ENCODE measurements at regions of chr2 and their contacts with region 1.

Region 1: DNA sequence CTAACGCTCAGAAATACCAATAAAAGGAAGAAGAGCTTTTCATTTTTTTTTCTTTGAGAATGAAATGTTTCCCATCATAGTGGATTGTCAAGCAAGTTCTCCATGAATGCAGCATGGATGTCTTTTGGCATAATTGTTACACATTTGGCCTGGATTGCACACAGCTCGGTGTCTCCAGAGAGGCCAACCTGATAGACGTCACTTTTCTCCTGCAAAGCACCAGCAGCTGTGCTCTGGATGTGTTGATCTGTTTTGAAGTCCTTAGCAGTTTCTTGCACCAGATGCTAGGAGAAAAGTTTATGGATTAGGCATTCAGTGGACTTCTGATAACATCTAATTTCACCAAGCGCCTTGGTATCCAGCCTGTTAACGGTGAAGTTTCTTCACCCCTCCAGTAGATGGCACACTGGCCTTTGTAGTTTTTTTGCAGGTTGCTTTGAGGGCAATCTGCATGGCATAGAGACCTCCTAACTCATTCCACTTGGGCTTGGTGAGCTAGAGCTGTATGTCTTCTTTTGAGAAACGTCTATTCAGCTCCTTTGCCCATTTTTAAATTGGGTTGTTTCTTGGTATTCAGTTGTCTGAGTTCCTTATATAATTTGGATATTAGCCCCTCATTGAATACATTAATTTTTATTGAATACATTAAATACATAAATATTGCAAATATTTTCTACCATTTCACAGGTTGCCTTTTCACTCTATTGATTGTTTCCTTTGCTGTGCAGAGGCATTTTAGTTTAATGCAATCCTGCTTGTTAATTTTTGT is 59.7 kb downstream of the PTH2R start:
- DNase-seq: peak; percentile 38
- H3K4me3 ChIP-seq: no peak overlapping the region
- H3K27ac ChIP-seq: no peak overlapping the region
- H3K4me1 ChIP-seq: no peaks in the 10 kb centered on the region
- H3K27me3 ChIP-seq: peaks cover 2% of the 10 kb centered on the region
- CTCF ChIP-seq: peak; percentile 68 to 84

Region 2: GRCh38 chr2:208783187-208783586 is 316.9 kb after region 1 on chr2:
- CTCF ChIA-PET with region 1: no interaction called
- dilution Hi-C with region 1: no loop called
- in situ Hi-C with region 1: no loop called
- intact Hi-C with region 1: loop called (anchors 1 kb)
- DNase-seq: no peak
- H3K4me3 ChIP-seq: no peak overlapping the region
- H3K27ac ChIP-seq: no peak overlapping the region
- H3K4me1 ChIP-seq: no peaks in the 10 kb centered on the region
- H3K27me3 ChIP-seq: no peaks in the 10 kb centered on the region
- CTCF ChIP-seq: peak in 1 of 2 donors; percentile 54

Region 3: GRCh38 chr2:208820014-208820688 is 353.8 kb after region 1 on chr2:
- CTCF ChIA-PET with region 1: no interaction called
- dilution Hi-C with region 1: no loop called
- in situ Hi-C with region 1: no loop called
- intact Hi-C with region 1: loop called (anchors 5 kb)
- DNase-seq: peak; percentile 13
- H3K4me3 ChIP-seq: no peak overlapping the region
- H3K27ac ChIP-seq: no peak overlapping the region
- H3K4me1 ChIP-seq: no peaks in the 10 kb centered on the region
- H3K27me3 ChIP-seq: no peaks in the 10 kb centered on the region
- CTCF ChIP-seq: peak; percentile 15 to 52

Measured in mammary epithelial cell (primary cell).